Caco-2 (cell line): ENCODE measurements at regions of chr15 and their contacts with region 1.

Region 1: DNA sequence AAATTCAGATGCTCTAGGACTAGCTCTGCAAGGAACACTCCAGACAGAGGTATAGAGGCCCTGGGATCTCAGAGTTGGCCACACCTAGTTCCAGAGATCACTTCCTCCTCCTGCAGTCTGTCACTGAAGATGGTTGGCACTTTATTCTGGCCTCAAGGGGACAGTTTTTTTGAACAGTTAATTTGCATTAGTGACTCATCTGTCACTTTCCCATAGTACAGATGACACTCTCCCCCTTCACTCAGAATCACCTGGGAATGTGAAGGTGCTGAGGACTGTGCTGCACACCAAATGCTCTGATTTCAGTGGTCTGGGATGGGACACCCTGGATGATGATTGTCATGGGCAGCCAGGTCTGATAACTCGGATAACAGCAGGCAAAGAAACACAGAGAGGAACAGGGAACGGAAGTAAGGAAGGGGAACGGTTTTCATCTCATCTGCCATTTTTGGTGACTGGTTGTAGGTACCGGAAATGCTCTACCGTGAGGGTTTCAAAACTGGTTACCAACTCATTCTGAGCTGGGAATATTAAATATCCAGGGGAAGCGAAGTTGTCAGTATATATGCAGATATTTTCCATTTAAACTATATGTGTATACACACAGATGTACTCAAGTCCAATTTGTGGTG is 232.5 kb upstream of the ST8SIA2 start:
- DNase-seq: no peak
- H3K4me3 ChIP-seq: no peak overlapping the region
- H3K4me3 Mint-ChIP-seq: no peak overlapping the region
- H3K27ac Mint-ChIP-seq: no peak overlapping the region
- H3K4me1 ChIP-seq: peaks cover 39% of the 10 kb centered on the region
- H3K4me1 Mint-ChIP-seq: peaks cover 29% of the 10 kb centered on the region
- H3K27me3 ChIP-seq: no peaks in the 10 kb centered on the region
- H3K27me3 Mint-ChIP-seq: no peaks in the 10 kb centered on the region
- CTCF ChIP-seq: no peak

Region 2: DNA sequence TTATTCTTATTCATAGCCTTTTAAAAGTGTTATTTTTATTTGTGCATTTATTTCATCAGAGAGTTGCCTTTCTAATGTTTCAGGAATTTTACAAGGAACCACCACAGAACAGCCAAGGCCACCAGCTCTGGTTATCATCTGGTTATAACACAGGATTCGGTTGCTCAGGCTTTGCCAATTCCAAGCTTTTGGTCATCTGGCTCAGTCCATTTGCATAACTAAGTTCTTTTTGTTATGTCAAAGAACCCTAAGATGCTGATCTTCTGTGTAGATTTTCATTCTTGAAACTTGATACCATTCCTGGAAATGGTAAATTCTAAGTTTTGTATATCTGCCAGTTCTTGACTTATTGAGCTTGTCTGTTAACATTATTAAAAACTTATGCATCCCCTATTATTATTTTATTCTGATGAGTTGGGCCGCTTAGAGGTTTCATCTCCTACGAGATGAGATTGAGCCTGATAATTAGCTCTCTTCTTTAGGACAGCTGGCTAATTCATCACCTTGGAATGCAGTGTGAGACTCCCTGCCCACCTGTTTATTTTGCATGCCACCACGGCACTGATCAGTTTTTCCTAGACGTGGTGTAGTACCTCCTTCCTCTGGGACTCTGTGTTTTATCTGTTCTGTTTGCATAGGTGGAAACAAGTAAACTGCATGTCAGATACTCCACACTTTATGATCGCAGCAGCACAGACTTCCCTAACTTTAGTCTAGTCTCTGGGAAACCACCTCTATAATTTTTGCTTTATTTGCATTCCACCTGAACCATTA is 42.8 kb before region 1 on chr15:
- CTCF ChIA-PET with region 1: no interaction called
- POLR2A ChIA-PET with region 1: no interaction called
- intact Hi-C with region 1: loop called (anchors 5 kb)
- DNase-seq: no peak
- H3K4me3 ChIP-seq: no peak overlapping the region
- H3K4me3 Mint-ChIP-seq: no peak overlapping the region
- H3K27ac Mint-ChIP-seq: no peak overlapping the region
- H3K4me1 ChIP-seq: peaks cover 10% of the 10 kb centered on the region
- H3K4me1 Mint-ChIP-seq: peaks cover 23% of the 10 kb centered on the region
- H3K27me3 ChIP-seq: no peaks in the 10 kb centered on the region
- H3K27me3 Mint-ChIP-seq: no peaks in the 10 kb centered on the region
- CTCF ChIP-seq: no peak

Region 3: GRCh38 chr15:92178911-92179310 is 17.8 kb after region 1 on chr15:
- CTCF ChIA-PET with region 1: no interaction called
- POLR2A ChIA-PET with region 1: no interaction called
- intact Hi-C with region 1: loop called (anchors 2 kb)
- DNase-seq: peak in 1 of 2 experiments; percentile 11
- H3K4me3 ChIP-seq: no peak overlapping the region
- H3K4me3 Mint-ChIP-seq: peak overlapping the region; percentile 15
- H3K27ac Mint-ChIP-seq: no peak overlapping the region
- H3K4me1 ChIP-seq: peaks cover 12% of the 10 kb centered on the region
- H3K4me1 Mint-ChIP-seq: peaks cover 7% of the 10 kb centered on the region
- H3K27me3 ChIP-seq: no peaks in the 10 kb centered on the region
- H3K27me3 Mint-ChIP-seq: no peaks in the 10 kb centered on the region
- CTCF ChIP-seq: no peak

Region 4: DNA sequence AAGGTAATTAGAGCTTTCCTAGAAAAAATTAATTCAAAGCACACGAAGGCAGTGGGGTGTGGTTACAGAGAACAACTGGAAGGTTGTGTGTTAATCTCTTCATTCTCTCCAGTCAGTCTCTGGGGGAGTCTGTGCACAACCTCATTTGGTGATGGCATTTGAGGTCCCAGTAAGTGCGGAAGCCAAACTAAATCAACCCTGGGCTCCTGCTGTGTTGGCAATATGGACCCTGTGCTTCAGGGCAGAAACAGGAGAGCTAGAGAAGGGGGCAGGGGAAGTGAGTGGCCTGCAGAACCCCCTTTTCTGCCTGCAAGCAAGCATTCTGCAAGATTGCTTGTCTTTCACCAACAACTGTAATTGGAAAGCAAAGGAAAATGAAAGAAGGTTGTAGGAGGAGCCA is 36.6 kb after region 1 on chr15:
- CTCF ChIA-PET with region 1: no interaction called
- POLR2A ChIA-PET with region 1: no interaction called
- intact Hi-C with region 1: no loop called
- DNase-seq: no peak
- H3K4me3 ChIP-seq: no peak overlapping the region
- H3K4me3 Mint-ChIP-seq: no peak overlapping the region
- H3K27ac Mint-ChIP-seq: no peak overlapping the region
- H3K4me1 ChIP-seq: no peaks in the 10 kb centered on the region
- H3K4me1 Mint-ChIP-seq: no peaks in the 10 kb centered on the region
- H3K27me3 ChIP-seq: no peaks in the 10 kb centered on the region; the same call in 1 of the 2 replicates
- H3K27me3 Mint-ChIP-seq: peaks cover 5% of the 10 kb centered on the region
- CTCF ChIP-seq: no peak

Region 5: DNA sequence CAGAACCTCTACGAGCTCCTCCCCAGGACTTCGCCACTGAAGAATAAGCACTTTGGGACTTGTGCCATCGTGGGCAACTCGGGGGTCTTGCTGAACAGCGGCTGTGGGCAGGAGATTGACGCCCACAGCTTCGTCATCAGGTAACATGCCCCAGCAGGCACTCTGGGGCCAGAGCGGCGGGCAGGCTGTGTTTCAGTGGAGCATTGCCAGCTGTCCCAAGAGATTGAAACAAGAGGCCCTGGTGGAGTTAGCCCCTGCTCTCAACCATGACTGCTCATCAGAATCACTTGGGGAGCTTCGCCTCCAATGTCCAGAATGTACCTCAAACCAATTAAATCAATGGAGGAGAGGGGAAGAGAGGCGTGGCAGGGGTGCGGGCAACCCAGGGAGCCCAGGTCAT is 277.3 kb after region 1 on chr15:
- CTCF ChIA-PET with region 1: no interaction called
- POLR2A ChIA-PET with region 1: no interaction called
- intact Hi-C with region 1: no loop called
- DNase-seq: no peak
- H3K4me3 ChIP-seq: no peak overlapping the region
- H3K4me3 Mint-ChIP-seq: no peak overlapping the region
- H3K27ac Mint-ChIP-seq: no peak overlapping the region
- H3K4me1 ChIP-seq: no peaks in the 10 kb centered on the region
- H3K4me1 Mint-ChIP-seq: no peaks in the 10 kb centered on the region
- H3K27me3 ChIP-seq: peaks cover 3% of the 10 kb centered on the region
- H3K27me3 Mint-ChIP-seq: peaks cover 9% of the 10 kb centered on the region
- CTCF ChIP-seq: no peak